GM10248 (cell line): ENCODE measurements at regions of chr12 and their contacts with region 1.

Region 1: DNA sequence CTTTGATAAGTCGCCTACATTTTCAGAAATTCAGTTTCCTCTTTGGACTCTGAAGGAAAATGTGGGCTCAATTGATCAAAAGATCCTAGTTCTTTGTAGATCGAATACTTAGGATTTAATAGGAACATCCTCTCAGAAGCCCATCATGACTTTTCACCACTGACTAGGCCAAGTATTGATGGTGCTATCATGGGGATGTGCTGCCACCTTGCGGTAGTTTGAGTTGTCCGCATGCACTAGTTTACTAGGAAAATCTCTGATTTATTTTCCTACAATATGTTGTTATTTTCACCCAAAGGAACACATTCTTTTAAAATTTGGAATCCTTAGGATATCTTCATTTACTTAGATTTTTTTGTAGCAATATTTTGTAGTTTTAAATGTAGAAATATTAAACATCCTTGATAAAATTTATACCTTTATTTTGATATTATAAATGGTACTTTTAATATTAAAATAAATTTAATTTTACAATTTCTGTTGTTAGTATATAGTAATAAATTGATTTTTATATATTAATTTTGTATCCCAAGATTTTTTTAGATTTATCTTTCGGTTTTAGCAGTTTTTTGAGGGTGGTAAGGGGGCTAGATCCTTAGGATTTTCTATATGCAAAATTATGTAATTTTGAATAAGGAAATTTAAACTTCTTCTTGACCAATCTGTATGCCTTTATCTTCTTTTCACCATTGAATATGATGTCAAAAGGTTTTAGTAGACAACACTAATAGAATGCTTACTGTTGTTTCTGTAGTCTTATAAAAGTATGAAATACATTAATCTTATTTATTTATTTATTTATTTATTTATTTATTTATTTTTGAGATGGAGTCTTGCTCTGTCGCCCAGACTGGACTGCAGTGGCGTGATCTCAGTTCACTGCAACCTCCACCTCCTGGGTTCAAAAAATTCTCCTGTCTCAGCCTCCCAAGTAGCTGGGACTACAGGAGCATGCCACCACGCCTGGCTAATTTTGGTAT is 52.9 kb upstream of the OR9K2 start:
- DNase-seq: peak; percentile 58
- CTCF ChIP-seq: peak; percentile 89

Region 2: DNA sequence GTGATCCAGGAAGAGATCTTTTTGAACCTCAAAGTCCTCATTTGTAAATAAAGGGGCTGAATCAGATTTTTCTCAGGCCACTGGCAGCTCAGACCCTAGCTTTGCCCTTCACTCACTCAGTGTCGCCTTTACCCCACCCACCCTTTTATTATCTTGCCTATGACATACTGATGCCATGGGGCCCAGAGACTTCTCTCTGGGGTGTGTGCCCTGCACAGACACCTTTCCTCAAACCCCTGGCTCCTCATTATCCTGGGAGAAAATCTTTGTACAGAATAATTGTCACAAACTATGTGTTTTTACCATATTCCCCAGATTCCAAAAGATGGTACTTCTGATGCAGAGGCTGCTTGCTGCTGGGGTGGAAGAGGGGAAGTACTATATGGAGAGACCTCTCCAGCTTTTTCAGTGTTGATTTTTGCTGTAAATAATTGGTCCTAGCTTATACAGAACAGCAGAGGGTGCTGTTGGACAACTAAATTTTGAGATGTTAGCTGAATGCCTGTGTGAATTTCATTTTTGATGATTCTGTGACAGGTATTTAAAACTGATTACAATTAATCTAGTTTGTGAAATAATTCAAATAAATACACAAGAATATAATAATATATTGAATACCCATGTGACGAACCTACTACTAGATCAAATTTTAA is 371.3 kb before region 1 on chr12:
- CTCF ChIA-PET with region 1: interaction called, 34 read pairs
- POLR2A ChIA-PET with region 1: no interaction called
- DNase-seq: peak; percentile 42
- CTCF ChIP-seq: peak; percentile 51

Region 3: GRCh38 chr12:54759751-54760150 is 313.6 kb before region 1 on chr12:
- CTCF ChIA-PET with region 1: interaction called, 13 read pairs
- POLR2A ChIA-PET with region 1: no interaction called
- DNase-seq: peak; percentile 16
- CTCF ChIP-seq: peak; percentile 39

Region 4: GRCh38 chr12:54958048-54958658 is 115.2 kb before region 1 on chr12:
- CTCF ChIA-PET with region 1: interaction called, 12 read pairs
- POLR2A ChIA-PET with region 1: no interaction called
- DNase-seq: peak; percentile 40
- CTCF ChIP-seq: peak; percentile 75

Region 5: DNA sequence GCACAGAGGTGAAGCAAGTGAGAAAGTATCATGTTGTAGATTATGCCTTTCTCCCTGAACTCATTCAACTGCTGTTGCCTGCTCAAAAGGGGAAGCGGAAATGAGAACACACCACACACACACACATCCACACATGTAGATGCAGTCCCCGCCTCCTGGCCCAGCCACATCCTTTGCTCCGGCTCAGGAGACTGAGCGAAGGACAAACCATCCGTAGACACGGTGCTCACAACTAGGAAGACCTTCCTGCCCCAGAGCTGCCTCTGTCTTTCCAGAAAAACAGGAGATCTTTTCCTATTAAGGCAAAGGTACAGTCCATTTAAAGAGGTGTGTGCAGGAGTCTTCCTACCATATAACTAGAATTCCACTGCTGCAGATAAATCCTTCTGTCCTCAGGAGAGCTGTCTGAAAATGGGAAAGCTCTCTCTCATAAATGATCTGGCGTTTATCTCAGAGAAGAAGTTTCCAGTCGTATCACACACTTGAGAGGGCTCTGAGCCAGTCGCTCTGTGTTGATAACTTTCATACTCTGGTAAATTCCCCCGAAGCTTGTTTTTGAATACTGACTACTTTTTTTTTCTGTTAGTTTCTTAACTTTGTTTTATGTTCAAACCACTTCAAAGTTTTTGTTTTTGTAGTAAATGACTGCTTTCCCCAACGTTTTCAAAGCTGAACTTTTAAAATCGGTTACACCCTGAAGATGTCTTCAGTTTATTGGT is 88.5 kb before region 1 on chr12 and contains the start of gene TESPA1:
- CTCF ChIA-PET with region 1: interaction called, 60 read pairs
- POLR2A ChIA-PET with region 1: no interaction called
- DNase-seq: peak; percentile 81
- CTCF ChIP-seq: no peak

Region 6: DNA sequence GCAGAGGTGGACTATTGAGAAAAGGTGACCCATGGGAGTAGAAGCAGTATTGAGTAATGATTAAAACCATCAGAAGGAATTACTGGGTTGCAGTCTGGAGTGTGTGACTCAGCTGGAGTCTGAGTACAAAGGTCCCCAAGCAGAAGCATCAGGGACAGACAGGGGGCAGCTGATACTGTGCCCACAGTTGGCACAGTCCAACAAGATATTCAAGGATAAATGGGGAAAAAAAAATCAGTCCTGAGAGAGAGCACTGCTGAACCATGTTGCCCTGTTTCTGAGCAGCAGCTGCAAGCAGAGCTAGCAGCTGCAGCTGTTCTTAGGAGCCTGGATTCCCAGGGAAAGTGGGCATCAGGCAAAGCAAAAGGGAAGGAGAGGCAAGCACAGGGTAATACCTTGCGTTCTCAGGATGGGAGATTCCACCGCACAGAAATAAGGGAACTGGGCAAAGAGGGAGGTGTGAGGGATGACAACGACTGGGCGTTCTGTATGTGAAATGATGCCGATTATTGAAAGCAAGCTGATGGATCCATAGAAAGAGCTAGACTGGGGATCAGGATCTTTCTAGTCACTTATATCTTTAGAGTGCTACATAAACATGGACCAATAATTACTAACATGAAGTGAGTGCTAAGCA is 35.9 kb before region 1 on chr12:
- CTCF ChIA-PET with region 1: interaction called, 14 read pairs
- POLR2A ChIA-PET with region 1: no interaction called
- DNase-seq: no peak
- CTCF ChIP-seq: no peak

Region 7: GRCh38 chr12:55060470-55060869 is 12.9 kb before region 1 on chr12:
- CTCF ChIA-PET with region 1: interaction called, 29 read pairs
- POLR2A ChIA-PET with region 1: no interaction called
- DNase-seq: peak; percentile 54
- CTCF ChIP-seq: no peak